H1 (cell line): ENCODE measurements at regions of chr11 and their contacts with region 1.

Region 1: DNA sequence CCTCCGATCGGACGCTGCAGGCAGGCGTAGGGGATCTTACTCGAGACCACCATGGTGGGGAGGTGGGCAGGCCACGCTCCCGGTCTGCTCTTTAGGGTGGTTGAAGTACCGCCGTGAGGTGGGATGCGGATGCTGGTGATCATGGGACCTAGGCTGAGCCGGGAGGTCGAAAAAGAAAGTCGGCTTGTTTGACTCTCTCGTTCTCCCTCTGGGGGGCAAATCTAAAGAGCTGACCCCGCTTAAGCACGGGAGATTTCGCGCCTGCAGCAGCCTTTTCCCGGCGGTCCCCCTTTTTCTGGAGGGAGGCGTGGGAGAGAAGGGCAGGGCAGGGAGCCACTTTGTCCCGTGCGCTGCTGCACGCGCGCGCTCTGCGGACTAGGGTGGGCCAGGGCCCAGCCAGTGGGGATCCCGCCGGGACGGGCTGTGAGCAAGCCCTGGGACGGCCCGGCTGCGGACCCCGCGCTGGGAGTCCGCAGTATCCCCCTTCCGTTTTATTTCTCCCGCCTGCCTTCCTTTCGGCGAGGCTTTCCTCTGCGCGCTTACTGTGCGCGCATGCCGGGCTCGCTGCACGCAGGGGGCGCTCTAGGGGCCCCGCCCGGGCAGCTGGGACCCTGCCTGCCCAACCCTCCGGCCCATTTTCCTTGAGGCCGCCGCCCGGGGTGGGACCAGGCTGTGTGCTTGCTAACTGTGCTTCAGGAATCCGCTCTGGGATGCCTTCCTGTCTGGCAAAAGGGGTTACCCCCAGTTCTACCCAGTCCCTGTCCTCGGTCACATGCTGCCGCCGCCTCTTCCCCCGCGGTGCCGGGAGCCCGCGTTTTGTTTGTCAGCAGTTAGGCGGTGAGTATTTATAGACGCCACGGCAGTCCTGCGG is 81.0 kb downstream of the PRR5L start:
- DNase-seq: peak; percentile 56 to 86
- H3K4me3 ChIP-seq: peak overlapping the region; percentile 81 to 98 (median 84)
- H3K27ac ChIP-seq: no peak overlapping the region
- H3K4me1 ChIP-seq: peaks cover 0 to 3% (median 1%) of the 10 kb centered on the region in 4 experiments; a peak in 1 of 7 replicates
- H3K27me3 ChIP-seq: peaks cover 4 to 23% (median 17%) of the 10 kb centered on the region in 4 experiments
- CTCF ChIP-seq: peak; percentile 56 to 58 (median 57)
- EP300 ChIP-seq: no peak
- POLR2A ChIP-seq: peak in 1 of 2 experiments; percentile 18; a peak in 1 of 3 replicates
- RAD21 ChIP-seq: peak; percentile 26 to 47

Region 2: GRCh38 chr11:36280531-36280930 is 96.6 kb before region 1 on chr11:
- CTCF ChIA-PET with region 1: no interaction called
- POLR2A ChIA-PET with region 1: no interaction called
- DNase-seq: no peak
- H3K4me3 ChIP-seq: no peak overlapping the region
- H3K27ac ChIP-seq: no peak overlapping the region
- H3K4me1 ChIP-seq: no peaks in the 10 kb centered on the region
- H3K27me3 ChIP-seq: no peaks in the 10 kb centered on the region
- CTCF ChIP-seq: no peak
- EP300 ChIP-seq: no peak
- POLR2A ChIP-seq: no peak
- RAD21 ChIP-seq: no peak

Region 3: DNA sequence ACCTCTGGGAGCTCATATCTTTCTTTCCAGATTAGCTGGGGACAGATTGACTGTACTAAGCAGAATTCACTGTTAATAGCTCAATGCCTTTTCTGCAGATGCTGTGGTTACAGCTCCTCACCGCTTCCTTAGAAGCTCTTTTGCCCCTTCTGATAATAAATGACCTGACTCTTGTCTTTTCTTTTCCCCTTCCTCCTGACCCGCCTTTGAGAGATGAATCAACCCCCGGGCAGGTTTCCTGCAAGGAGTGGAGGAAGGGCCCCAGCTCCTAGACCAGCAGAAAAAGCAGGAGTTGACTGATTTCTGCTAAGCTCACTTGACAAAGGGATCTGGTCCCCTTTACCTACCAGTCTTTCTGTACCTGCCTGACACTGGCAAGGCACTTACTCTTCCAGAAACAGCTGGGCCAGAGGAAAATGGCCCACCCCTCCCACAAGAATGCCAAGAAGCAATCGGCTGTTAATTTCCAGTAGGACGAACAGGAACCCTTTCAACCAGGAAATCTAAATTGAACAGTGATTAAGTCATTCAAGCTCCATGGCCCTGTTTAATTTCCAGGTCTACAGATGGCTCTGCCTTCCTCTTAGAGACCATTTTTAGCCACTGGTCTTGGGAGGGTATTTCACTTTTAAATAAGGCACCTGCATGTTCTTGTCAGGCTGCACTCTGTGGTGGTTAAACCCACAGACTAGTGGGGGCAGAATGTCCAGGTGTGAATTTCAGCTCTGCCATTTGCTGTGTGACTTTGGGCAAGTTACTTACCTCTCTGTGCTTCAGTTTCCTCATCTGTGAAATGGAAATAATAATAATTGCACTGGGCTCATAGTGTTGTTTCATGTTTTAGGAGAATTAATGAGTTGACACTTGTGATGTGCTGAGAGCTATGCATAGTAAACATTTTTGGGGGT is 13.5 kb before region 1 on chr11:
- CTCF ChIA-PET with region 1: interaction called, 33 read pairs
- POLR2A ChIA-PET with region 1: interaction called, 17 read pairs
- DNase-seq: peak in 1 of 2 experiments; percentile 47
- H3K4me3 ChIP-seq: no peak overlapping the region
- H3K27ac ChIP-seq: no peak overlapping the region
- H3K4me1 ChIP-seq: peaks cover 0 to 11% (median 6%) of the 10 kb centered on the region in 4 experiments; a peak in 3 of 7 replicates
- H3K27me3 ChIP-seq: peaks cover 0 to 4% (median 0%) of the 10 kb centered on the region in 4 experiments; a peak in 4 of 7 replicates
- CTCF ChIP-seq: no peak
- EP300 ChIP-seq: no peak
- POLR2A ChIP-seq: no peak
- RAD21 ChIP-seq: no peak

Region 4: DNA sequence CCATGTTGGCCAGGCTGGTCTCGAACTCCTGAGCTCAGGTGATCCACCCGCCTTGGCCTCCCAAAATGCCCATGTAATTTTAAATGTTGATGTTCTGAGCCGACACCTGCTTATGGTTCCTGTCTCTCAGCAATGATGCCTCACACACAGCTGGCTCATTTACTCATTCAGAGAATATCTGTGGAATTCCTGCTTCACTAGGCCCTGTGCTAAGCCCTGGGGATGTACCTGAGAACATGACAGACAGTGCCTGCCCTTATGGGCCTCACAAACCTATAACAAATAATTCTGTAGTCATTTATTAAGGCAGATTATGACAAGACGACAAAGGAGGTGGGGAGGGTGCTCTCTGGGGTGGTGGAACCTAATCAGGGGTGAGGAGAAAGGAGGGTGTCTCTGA is 12.7 kb after region 1 on chr11:
- CTCF ChIA-PET with region 1: interaction called, 12 read pairs
- POLR2A ChIA-PET with region 1: interaction called, 3 read pairs
- DNase-seq: no peak
- H3K4me3 ChIP-seq: no peak overlapping the region
- H3K27ac ChIP-seq: no peak overlapping the region
- H3K4me1 ChIP-seq: no peaks in the 10 kb centered on the region; a peak in 1 of 7 replicates
- H3K27me3 ChIP-seq: no peaks in the 10 kb centered on the region
- CTCF ChIP-seq: no peak
- EP300 ChIP-seq: no peak
- POLR2A ChIP-seq: no peak
- RAD21 ChIP-seq: no peak

Region 5: DNA sequence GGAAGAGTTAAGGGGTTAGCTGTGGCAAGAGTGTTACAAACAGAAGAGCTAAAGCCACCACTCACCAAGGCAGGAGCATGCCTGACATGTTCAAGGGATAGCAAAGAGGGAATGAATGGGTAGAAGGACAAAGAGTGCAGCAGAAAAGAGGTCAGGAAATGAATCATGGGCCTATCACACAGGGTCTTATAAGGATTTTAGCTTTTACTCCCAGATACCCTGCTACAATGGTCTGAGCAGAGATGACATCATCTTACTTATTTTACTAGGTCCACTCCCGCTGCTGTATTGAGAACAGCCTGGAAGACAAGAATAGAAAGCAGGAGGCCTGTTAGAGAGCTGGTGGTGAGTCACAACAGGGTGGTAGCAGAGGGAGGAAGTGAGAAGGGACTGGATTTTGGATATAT is 123.2 kb after region 1 on chr11:
- CTCF ChIA-PET with region 1: no interaction called
- POLR2A ChIA-PET with region 1: no interaction called
- DNase-seq: no peak
- H3K4me3 ChIP-seq: no peak overlapping the region
- H3K27ac ChIP-seq: no peak overlapping the region
- H3K4me1 ChIP-seq: no peaks in the 10 kb centered on the region
- H3K27me3 ChIP-seq: no peaks in the 10 kb centered on the region
- CTCF ChIP-seq: no peak
- EP300 ChIP-seq: no peak
- POLR2A ChIP-seq: no peak
- RAD21 ChIP-seq: no peak

Region 6: DNA sequence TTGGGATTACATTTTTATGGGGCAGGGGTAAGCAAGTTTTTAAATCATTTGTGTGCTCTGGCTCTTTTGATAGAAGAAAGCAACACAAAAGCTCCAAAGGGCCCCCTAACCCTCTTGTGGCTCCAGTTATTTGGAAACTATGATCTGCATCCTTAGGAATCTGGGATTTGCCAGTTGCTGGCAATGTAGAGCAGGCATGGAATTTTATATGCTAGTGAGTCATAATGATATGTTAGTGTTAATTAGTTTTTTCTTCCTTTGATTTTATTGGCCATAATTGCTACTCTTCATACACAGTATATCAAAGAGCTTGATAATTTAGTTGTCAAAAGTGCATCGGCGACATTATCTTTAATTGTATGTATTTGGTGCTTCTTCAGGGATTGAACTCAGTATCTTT is 200.7 kb after region 1 on chr11:
- CTCF ChIA-PET with region 1: no interaction called
- POLR2A ChIA-PET with region 1: no interaction called
- DNase-seq: no peak
- H3K4me3 ChIP-seq: no peak overlapping the region
- H3K27ac ChIP-seq: no peak overlapping the region
- H3K4me1 ChIP-seq: no peaks in the 10 kb centered on the region
- H3K27me3 ChIP-seq: no peaks in the 10 kb centered on the region
- CTCF ChIP-seq: no peak
- EP300 ChIP-seq: no peak
- POLR2A ChIP-seq: no peak
- RAD21 ChIP-seq: no peak